H1 (cell line): ENCODE measurements at regions of chr1 and their contacts with region 1.

Region 1: GRCh38 chr1:91791103-91791502 is 94.8 kb downstream of the TGFBR3 start:
- DNase-seq: no peak
- H3K4me3 ChIP-seq: no peak overlapping the region
- H3K27ac ChIP-seq: no peak overlapping the region
- H3K4me1 ChIP-seq: peaks cover 8 to 20% (median 12%) of the 10 kb centered on the region in 4 experiments
- H3K27me3 ChIP-seq: no peaks in the 10 kb centered on the region
- CTCF ChIP-seq: no peak; a peak in 1 of 4 replicates
- EP300 ChIP-seq: no peak
- POLR2A ChIP-seq: no peak
- RAD21 ChIP-seq: peak; percentile 13 to 24; a peak in 1 of 4 replicates

Region 2: GRCh38 chr1:91803847-91804545 is 12.9 kb after region 1 on chr1:
- CTCF ChIA-PET with region 1: interaction called, 18 read pairs
- POLR2A ChIA-PET with region 1: interaction called, 5 read pairs
- DNase-seq: no peak
- H3K4me3 ChIP-seq: no peak overlapping the region
- H3K27ac ChIP-seq: no peak overlapping the region
- H3K4me1 ChIP-seq: peaks cover 0 to 8% (median 0%) of the 10 kb centered on the region in 4 experiments; a peak in 2 of 7 replicates
- H3K27me3 ChIP-seq: no peaks in the 10 kb centered on the region
- CTCF ChIP-seq: no peak
- EP300 ChIP-seq: no peak
- POLR2A ChIP-seq: no peak
- RAD21 ChIP-seq: no peak

Region 3: DNA sequence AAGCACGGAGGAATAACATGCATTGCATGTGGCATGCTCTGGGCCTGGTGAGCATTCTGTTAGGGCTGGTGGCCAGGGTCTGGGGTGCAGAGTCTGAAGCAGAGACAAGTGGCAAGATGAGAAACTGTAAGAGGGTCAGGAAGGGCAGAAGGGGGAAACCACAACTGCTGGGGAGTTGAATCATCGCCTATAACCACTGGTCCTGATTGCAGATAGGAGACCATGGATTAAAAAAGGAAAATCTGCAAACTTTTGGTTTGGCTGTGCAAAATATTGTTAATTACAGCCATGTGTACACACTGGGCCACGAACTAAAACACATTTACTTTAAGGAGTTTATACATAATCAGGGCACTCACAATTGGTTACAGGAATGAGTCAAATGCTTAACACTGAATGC is 18.2 kb after region 1 on chr1:
- CTCF ChIA-PET with region 1: interaction called, 18 read pairs
- POLR2A ChIA-PET with region 1: interaction called, 5 read pairs
- DNase-seq: no peak
- H3K4me3 ChIP-seq: no peak overlapping the region
- H3K27ac ChIP-seq: no peak overlapping the region
- H3K4me1 ChIP-seq: peaks cover 0 to 8% (median 2%) of the 10 kb centered on the region in 4 experiments; a peak in 3 of 7 replicates
- H3K27me3 ChIP-seq: no peaks in the 10 kb centered on the region
- CTCF ChIP-seq: no peak
- EP300 ChIP-seq: no peak
- POLR2A ChIP-seq: no peak
- RAD21 ChIP-seq: no peak